Tibial artery (tissue), 4 donors: ENCODE measurements at regions of chr7 and their contacts with region 1.

Region 1: GRCh38 chr7:151057989-151058780 is 488 bp upstream of the CDK5 start:
- DNase-seq: peak; percentile 99 to 100
- H3K4me3 ChIP-seq: peak overlapping the region; percentile 65 to 81
- H3K27ac ChIP-seq: peak overlapping the region; percentile 91 to 98
- H3K4me1 ChIP-seq: peaks cover 0 to 54% (median 48%) of the 10 kb centered on the region in 4 donors
- H3K27me3 ChIP-seq: no peaks in the 10 kb centered on the region
- CTCF ChIP-seq: no peak

Region 2: DNA sequence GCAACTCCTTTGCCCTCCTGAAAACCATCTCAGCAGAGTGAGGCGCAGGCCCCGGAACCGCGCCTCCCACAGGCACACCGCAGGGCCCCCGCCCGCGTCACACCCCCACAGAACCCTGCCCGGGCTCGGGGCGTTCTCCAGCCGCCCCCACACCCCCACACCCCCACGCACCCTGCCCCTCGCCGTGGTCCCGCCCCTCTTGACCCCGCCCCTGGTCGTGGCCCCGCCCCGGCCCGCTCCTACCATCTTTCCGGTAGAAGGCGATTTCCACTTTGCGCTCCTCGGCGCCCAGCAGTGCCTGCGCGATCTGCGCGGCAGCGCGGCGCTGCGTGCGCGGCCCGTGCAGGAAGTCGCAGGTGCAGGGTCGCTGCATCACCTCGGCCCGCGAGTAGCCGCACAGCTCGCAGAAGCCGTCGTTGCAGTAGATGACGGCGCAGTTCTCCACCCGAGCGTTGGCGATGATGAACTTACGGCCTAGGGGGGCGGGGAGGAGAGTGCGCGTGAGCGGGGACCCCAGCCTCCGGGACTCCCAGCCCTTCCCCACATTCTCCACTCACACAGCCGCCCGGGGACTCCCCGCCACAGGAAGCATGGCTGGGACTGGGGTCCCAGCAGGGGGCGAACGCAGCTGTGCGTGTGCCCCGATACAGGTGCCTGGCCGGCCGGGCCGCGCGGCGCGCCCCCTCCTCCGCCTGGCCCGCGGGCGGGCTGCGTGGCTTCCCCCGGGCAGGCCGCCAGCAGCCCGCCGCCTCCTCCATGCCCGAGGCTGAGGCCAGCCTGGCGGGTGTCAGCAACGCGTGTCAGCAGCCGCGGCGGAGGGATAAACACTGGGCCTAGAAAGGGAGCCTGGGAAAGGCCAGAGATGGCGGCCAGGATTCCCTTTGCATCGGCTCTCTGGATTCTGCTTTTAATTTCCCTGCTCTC is 83.5 kb before region 1 on chr7:
- intact Hi-C with region 1: no loop called
- DNase-seq: no peak
- H3K4me3 ChIP-seq: peak overlapping the region; percentile 31 to 40
- H3K27ac ChIP-seq: no peak overlapping the region
- H3K4me1 ChIP-seq: peaks cover 0 to 40% (median 31%) of the 10 kb centered on the region in 4 donors
- H3K27me3 ChIP-seq: peaks cover 0 to 95% of the 10 kb centered on the region in 2 donors
- CTCF ChIP-seq: no peak

Region 3: GRCh38 chr7:151028131-151028947 is 29.8 kb before region 1 on chr7 and contains the start of gene ABCB8:
- intact Hi-C with region 1: loop called (anchors 2 kb)
- DNase-seq: peak; percentile 99
- H3K4me3 ChIP-seq: peak within 1 kb of the TSS; percentile 67 to 70
- H3K27ac ChIP-seq: peak within 1 kb of the TSS; percentile 55 to 75
- H3K4me1 ChIP-seq: peaks cover 0 to 12% (median 4%) of the 10 kb centered on the region in 4 donors
- H3K27me3 ChIP-seq: peaks cover 0 to 11% of the 10 kb centered on the region in 2 donors
- CTCF ChIP-seq: peak; percentile 50 to 52

Region 4: DNA sequence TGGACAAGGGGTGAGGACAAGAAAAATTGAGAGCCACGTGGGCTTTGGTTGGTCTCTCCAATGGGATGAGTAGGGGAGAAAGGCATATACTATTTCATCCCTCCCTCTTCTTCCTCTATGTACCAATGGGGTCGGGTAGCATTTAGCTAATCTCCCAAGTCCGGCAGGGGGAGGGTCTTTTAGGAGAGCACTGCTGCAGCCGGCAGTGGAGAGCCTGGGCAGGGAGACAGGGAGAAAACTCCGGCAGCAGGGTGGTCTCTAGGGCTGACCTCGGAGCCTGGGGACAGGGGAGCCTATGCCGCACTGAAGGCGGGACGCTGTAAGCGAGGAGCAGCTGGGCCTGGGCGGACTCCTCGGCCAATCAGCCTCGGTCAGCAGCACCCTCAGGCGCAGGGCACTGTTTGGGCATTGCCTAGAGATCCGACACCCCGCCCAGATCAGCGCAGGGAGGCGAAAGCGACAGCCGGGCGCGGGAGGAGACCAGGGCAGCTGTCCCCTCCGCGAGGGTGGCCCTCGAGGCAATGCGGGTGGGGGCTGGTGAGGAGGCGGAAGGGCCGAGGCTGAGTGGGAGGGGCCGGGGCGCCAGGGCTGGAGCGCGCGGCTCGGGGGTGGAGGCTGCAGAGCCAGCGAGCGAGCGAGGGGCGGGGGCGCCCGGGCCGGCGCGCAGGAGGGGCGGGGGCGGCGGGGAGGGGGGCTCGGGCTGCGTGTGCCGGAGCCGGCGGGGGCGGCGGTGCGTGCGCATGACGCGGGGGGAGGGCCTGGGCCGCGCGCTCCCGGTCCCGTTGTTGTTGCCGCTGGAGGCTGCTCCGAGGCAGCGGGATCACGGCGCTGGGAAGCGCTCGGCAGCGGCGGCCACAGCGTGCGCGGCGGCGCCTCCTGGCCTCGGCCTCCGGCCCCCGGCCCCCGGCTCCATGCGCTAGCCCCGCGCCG is 27.8 kb after region 1 on chr7 and contains the start of gene AGAP3:
- intact Hi-C with region 1: loop called (anchors 2 kb)
- DNase-seq: peak; percentile 89 to 96
- H3K4me3 ChIP-seq: peak within 1 kb of the TSS; percentile 76 to 94
- H3K27ac ChIP-seq: peak within 1 kb of the TSS; percentile 82 to 86
- H3K4me1 ChIP-seq: peaks cover 0 to 69% (median 46%) of the 10 kb centered on the region in 4 donors
- H3K27me3 ChIP-seq: no peaks in the 10 kb centered on the region
- CTCF ChIP-seq: no peak